ENCODE measurements at regions of chr12 and their contacts with region 1.

Region 1: DNA sequence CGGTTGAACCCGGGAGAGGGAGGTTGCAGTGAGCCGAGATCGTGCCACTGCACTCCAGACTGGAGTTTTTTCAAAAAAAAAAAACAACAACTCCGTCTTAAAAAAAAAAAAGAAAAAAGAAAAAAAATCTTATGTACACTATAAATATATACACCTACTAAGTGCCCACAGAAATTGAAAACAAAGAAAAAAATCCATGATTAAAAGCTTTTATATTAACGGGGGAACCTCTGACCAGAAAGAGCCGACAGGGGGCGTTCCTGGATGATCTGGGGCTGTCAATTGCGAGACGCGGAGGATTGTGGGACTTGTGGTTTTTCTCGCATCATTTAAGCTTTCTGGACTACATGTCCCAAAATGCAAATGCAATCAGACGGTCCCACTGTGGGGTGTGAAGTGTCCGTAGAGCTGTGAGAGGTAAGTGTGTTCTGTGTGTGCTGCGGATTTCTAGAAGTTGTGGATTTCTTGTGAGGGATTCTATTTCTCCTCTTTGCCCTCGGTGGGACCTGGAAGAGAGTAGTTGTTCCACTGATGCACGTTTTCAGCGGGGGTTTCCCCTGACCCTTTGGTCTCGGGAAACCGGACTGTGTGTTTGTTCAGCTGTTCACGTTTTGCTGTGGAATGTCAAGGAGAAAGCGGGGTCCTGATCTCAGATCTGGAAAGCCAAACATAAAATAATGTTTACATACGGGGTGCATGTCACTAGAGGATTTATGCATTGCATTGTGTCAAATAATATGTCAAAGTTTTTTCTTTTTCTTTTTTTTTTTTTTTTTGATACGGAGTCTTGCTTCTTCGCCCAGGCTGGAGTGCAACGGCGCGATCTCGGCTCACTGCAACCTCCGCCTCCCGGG is at the start of gene SIRT4:
- DNase-seq: peak; percentile 96
- H3K4me3 ChIP-seq: peak within 1 kb of the TSS; percentile 71
- H3K27ac ChIP-seq: peak within 1 kb of the TSS; percentile 83
- H3K4me1 ChIP-seq: peaks cover 3% of the 10 kb centered on the region
- H3K27me3 ChIP-seq: no peaks in the 10 kb centered on the region
- CTCF ChIP-seq: peak; percentile 95
- total RNA-seq, gene SIRT4: 3.7 and 4.8 TPM in 2 replicates

Region 2: GRCh38 chr12:120257041-120257821 is 45.0 kb before region 1 on chr12:
- CTCF ChIA-PET with region 1: no interaction called
- POLR2A ChIA-PET with region 1: no interaction called
- intact Hi-C with region 1: no loop called
- DNase-seq: peak; percentile 87
- H3K4me3 ChIP-seq: no peak overlapping the region
- H3K27ac ChIP-seq: peak overlapping the region; percentile 61
- H3K4me1 ChIP-seq: peaks cover 11% of the 10 kb centered on the region
- H3K27me3 ChIP-seq: no peaks in the 10 kb centered on the region
- CTCF ChIP-seq: no peak

Region 3: GRCh38 chr12:120283318-120283717 is 18.9 kb before region 1 on chr12:
- CTCF ChIA-PET with region 1: interaction called, 7 read pairs
- POLR2A ChIA-PET with region 1: interaction called, 10 read pairs
- intact Hi-C with region 1: no loop called
- DNase-seq: no peak
- H3K4me3 ChIP-seq: no peak overlapping the region
- H3K27ac ChIP-seq: peak overlapping the region; percentile 71
- H3K4me1 ChIP-seq: peaks cover 3% of the 10 kb centered on the region
- H3K27me3 ChIP-seq: no peaks in the 10 kb centered on the region
- CTCF ChIP-seq: no peak